CD8-positive, alpha-beta memory T cell (primary cell): ENCODE measurements at regions of chr5 and their contacts with region 1.

Region 1: DNA sequence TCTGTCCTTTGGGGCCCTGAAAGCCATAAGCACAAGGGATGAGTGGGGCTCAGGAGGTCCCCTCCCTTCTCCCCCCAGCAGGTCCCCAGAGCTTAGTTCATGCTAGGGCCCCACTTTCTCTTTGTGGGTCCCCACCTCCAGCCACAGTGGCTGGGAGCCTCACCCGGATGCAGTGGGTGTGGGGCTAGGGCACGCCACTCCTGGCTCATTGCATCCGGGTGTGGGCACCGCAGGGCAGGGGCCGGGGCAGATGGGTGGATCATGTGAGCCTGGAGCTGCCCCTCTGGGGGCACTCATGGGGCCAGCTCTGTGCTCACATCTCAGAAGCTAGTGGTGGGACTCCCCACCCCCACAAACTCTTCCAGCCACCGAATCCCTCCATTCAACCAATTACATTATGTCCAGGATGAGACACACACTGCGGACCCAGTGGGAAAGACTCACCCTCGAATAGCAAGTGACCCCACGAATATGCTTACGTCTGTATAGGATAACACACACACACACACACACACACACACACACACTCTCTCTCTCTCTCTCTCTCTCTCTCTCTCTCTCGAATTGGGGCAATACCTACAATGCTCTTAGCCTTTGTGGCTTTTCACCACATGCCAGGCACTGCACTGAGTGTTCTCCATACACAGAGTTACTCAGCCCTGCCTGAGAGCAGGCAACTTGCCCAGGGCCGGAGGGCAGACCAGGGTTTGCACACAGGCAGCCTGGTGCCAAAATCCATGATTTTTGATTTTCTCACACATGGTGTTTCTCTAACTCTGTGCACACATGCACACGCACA is 16.8 kb upstream of the PHYKPL start:
- DNase-seq: peak in 4 of 5 donors; percentile 35 to 80 (median 54)
- H3K4me3 ChIP-seq: no peak overlapping the region
- H3K4me3 Mint-ChIP-seq: peak overlapping the region; percentile 66 to 84 (median 79)
- H3K27ac ChIP-seq: no peak overlapping the region
- H3K27ac Mint-ChIP-seq: peak overlapping the region in 7 of 8 donors; percentile 85 to 94 (median 91)
- H3K4me1 ChIP-seq: peaks cover 23% of the 10 kb centered on the region
- H3K4me1 Mint-ChIP-seq: peaks cover 22 to 38% (median 36%) of the 10 kb centered on the region in 3 donors
- H3K27me3 ChIP-seq: no peaks in the 10 kb centered on the region
- H3K27me3 Mint-ChIP-seq: peaks cover 0 to 4% of the 10 kb centered on the region in 2 donors

Region 2: DNA sequence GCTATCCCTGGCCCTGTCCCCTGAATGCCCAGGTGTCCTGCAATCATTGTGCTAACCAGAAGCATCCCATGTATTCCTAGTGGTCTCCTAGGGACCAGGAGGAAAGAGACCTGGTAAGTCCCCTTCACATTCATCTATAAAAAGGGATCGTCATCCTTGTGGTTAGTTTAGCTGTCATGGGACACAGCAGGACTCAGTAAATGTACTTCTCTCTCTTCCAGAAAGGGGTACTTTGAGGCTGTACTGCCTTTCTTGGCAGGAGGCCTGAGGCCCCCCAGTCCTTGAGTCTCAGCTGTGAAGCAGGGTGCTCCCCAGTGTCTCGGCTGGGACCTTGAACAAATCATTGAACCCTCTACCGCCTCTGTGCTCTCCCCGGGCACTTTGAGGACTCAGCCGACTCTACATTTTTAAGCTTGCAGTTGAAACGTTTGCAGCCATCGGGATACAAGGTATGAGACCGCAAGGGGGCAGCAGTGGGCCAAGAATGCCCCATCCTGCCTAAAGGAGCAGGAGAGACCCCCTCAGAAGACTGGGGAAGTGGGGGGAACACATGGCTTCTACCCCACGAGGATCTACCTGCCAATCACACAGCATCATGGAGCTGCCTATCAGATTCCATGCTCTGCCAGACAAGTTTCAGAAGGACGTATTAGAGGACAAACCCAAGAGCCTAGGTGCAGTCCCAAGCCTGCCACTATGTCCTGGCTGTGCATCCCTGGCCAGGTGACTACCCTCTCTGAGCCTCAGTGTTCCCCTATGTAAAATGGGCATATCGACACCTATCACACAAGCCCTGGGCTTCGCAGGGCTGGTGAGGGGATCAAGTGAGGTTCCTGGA is 14.4 kb before region 1 on chr5:
- CTCF ChIA-PET with region 1: interaction called, 13 read pairs
- POLR2A ChIA-PET with region 1: no interaction called
- DNase-seq: peak; percentile 64 to 84 (median 69)
- H3K4me3 ChIP-seq: no peak overlapping the region
- H3K4me3 Mint-ChIP-seq: peak overlapping the region in 6 of 7 donors; percentile 18 to 83 (median 56)
- H3K27ac ChIP-seq: no peak overlapping the region
- H3K27ac Mint-ChIP-seq: peak overlapping the region; percentile 15 to 91 (median 62)
- H3K4me1 ChIP-seq: peaks cover 69% of the 10 kb centered on the region
- H3K4me1 Mint-ChIP-seq: peaks cover 62 to 85% (median 66%) of the 10 kb centered on the region in 3 donors
- H3K27me3 ChIP-seq: no peaks in the 10 kb centered on the region
- H3K27me3 Mint-ChIP-seq: no peaks in the 10 kb centered on the region